ENCODE measurements at regions of chr16 and their contacts with region 1.

Region 1: DNA sequence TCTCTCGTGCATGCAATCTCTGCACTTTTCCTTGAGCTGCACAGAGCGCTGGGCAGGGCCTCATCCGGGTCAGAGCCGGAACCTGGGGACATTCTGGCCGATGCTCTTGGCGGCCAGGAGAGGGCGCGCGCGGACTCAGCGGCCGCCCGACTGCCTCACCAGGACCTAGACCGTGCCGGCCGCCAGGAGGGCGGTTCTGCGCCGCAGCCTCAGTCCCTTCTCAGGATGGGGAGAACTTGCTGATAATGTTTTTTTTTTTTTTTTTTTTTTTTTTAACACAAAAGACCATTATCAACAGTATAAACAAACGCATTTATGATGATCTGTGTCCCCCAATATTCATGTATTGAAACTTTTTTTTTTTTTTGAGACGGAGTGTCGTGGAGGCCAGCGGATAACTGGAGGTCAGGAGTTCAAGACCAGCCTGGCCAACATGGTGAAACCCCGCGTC is 8.1 kb upstream of the FLYWCH2 start:
- DNase-seq: peak; percentile 85
- ATAC-seq: peak; percentile 100
- H3K4me3 Mint-ChIP-seq: no peak overlapping the region
- H3K27ac Mint-ChIP-seq: no peak overlapping the region
- H3K4me1 Mint-ChIP-seq: no peaks in the 10 kb centered on the region
- H3K27me3 Mint-ChIP-seq: peaks cover 1% of the 10 kb centered on the region

Region 2: GRCh38 chr16:2278272-2278608 is 596.7 kb before region 1 on chr16:
- CTCF ChIA-PET with region 1: no interaction called
- POLR2A ChIA-PET with region 1: no interaction called
- intact Hi-C with region 1: no loop called
- DNase-seq: no peak
- ATAC-seq: no peak
- H3K4me3 Mint-ChIP-seq: no peak overlapping the region
- H3K27ac Mint-ChIP-seq: no peak overlapping the region
- H3K4me1 Mint-ChIP-seq: no peaks in the 10 kb centered on the region
- H3K27me3 Mint-ChIP-seq: no peaks in the 10 kb centered on the region

Region 3: GRCh38 chr16:2919511-2920255 is 44.7 kb after region 1 on chr16:
- CTCF ChIA-PET with region 1: interaction called, 12 read pairs
- POLR2A ChIA-PET with region 1: no interaction called
- intact Hi-C with region 1: loop called (anchors 1 kb)
- DNase-seq: peak; percentile 72
- ATAC-seq: peak; percentile 60
- H3K4me3 Mint-ChIP-seq: no peak overlapping the region
- H3K27ac Mint-ChIP-seq: no peak overlapping the region
- H3K4me1 Mint-ChIP-seq: peaks cover 18% of the 10 kb centered on the region
- H3K27me3 Mint-ChIP-seq: no peaks in the 10 kb centered on the region

Region 4: DNA sequence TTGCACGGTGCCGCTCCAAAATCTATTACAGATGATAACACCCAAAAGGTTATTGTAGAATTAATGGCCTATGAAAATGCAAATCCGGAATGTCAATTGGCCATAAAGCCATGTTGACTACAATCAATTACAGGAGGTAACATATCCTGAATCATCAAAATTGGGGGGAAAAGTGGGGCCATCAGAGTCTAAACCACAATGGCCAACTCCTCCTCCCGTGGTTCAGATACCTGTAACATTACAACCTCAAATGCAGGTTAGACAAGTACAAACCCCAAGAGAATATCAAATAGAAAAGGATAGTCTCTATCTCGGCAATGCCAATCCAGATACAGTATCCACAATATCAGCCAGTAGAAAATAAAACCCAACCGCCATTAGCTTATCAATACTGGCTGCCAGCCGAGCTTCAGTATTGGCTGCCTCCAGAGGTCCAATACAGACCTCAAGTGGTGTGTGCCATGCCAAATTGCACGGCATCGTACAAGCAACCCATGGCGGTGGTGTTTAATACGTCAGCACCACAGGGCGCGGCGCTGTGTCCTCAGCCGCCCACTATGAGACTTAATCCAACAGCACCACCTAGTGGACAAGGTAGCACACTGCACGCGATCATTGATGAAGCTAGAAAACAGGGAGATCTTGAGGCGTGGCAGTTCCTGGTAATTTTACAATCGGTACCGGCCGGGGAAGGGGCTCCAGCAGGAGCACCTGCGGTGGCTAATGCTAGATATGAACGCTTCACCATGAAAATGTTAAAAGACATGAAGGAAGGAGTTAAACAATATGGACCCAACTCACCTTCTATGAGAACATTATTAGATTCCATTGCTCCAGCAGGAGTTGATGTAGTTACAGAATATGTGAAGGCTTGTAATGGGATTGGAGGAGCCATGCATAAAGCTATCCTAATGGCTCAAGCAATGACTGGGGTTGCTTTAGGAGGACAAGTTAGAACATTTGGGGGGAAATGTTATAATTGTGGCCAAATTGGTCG is 52.0 kb after region 1 on chr16:
- CTCF ChIA-PET with region 1: interaction called, 26 read pairs
- POLR2A ChIA-PET with region 1: no interaction called
- intact Hi-C with region 1: loop called (anchors 1 to 2 kb)
- DNase-seq: peak; percentile 93
- ATAC-seq: peak; percentile 99
- H3K4me3 Mint-ChIP-seq: no peak overlapping the region
- H3K27ac Mint-ChIP-seq: no peak overlapping the region
- H3K4me1 Mint-ChIP-seq: peaks cover 11% of the 10 kb centered on the region
- H3K27me3 Mint-ChIP-seq: no peaks in the 10 kb centered on the region